ENCODE measurements at regions of chr4 and their contacts with region 1.

Region 1: GRCh38 chr4:79597266-79597665 is 189.2 kb upstream of the GK2 start:
- DNase-seq: no peak
- ATAC-seq: no peak
- H3K4me3 ChIP-seq: no peak overlapping the region
- H3K27ac ChIP-seq: no peak overlapping the region
- H3K4me1 ChIP-seq: peaks cover 5 to 7% of the 10 kb centered on the region in 2 donors
- H3K27me3 ChIP-seq: no peaks in the 10 kb centered on the region
- CTCF ChIP-seq: no peak
- POLR2A ChIP-seq: no peak

Region 2: DNA sequence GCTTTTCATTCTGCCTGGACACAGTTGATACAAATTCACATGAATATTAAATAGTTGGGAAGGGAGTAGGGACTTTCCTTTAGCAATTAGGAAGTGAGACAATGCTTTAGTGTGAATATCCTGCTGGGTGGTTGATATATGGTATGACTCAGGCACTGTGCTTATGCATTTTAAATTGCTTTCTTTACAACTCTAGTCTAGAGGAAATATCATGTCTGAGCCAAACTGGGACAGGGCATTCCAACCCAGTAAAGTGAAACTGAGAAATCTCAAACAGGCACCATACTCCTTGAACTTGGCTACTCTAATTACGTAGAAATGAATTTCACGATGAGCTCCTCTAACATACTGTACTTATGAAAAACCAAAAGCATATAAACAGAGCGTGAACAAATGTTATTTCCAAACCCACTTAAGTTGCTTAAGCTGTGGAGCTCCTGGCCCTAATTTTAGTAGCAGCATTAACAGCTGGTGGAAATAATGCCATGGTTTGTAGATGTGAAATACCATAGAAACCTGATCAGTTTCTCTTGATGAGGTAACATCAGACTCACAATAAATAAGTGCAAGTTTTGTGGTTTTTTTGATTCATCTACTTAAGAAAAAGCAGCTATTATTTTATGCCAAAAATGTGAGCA is 53.6 kb after region 1 on chr4:
- in situ Hi-C with region 1: no loop called
- intact Hi-C with region 1: loop called (anchors 5 kb)
- DNase-seq: no peak
- ATAC-seq: peak; percentile 51 to 58
- H3K4me3 ChIP-seq: no peak overlapping the region
- H3K27ac ChIP-seq: peak overlapping the region in 3 of 4 donors; percentile 41 to 48 (median 44)
- H3K4me1 ChIP-seq: peaks cover 14 to 23% of the 10 kb centered on the region in 2 donors
- H3K27me3 ChIP-seq: no peaks in the 10 kb centered on the region
- CTCF ChIP-seq: no peak
- POLR2A ChIP-seq: no peak

Region 3: GRCh38 chr4:79923281-79923680 is 326.0 kb after region 1 on chr4:
- in situ Hi-C with region 1: no loop called
- intact Hi-C with region 1: no loop called
- DNase-seq: no peak
- ATAC-seq: no peak
- H3K4me3 ChIP-seq: no peak overlapping the region
- H3K27ac ChIP-seq: no peak overlapping the region
- H3K4me1 ChIP-seq: no peaks in the 10 kb centered on the region
- H3K27me3 ChIP-seq: no peaks in the 10 kb centered on the region
- CTCF ChIP-seq: no peak
- POLR2A ChIP-seq: no peak

Measured in gastrocnemius medialis (tissue), 4 donors.